PC-9 (cell line): ENCODE measurements at regions of chr15 and their contacts with region 1.

Region 1: DNA sequence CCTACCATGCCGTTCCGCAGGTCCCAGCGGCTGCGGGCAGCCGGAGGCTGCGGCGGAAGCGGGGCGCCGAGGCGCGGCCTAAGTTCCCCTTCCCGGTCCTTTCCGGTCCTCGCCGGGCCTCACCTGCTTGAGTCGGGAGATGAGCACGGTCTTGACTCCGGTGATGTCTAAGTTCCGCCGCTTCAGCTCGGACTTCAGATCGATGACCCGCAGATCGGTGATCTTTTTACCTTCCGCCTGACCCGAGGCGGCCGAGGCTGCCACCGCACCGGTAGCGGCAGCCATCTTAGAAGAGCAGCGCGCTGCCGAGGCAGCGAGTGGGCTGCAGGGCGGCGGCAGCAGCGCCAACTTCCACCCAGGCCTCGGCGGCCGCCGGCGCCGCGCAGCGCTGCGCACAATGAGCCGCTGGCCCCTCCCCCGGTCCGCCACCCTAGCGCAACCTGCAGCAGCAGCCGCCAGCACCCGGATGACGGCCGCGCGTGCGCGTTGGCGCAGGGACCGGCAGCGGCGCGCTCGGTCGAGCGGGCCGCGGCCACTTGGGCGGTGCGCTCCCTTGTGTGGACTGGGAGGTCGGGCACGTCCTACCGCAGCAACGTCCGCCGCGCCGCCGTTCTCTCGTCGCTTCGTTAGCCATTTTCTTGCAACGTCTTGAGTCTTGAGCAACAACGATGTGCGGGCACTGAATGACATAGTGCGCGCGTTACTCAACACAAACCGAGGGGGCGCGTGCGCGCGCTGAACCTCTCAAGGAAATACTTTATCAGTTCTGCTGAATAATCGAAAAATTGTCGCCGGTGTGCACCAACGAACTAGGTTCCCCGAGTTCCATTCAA is at the start of gene SLTM:
- DNase-seq: peak; percentile 85 to 89
- H3K4me3 ChIP-seq: peak within 1 kb of the TSS; percentile 96
- H3K27ac ChIP-seq: peak within 1 kb of the TSS; percentile 98
- H3K4me1 ChIP-seq: peaks cover 21% of the 10 kb centered on the region
- H3K27me3 ChIP-seq: no peaks in the 10 kb centered on the region
- CTCF ChIP-seq: peak; percentile 46; the same call in 1 of the 2 replicates
- total RNA-seq, gene SLTM: 81.4 and 110 TPM in 2 replicates

Region 2: GRCh38 chr15:58616171-58616570 is 317.3 kb before region 1 on chr15:
- CTCF ChIA-PET with region 1: no interaction called
- POLR2A ChIA-PET with region 1: no interaction called
- intact Hi-C with region 1: no loop called
- DNase-seq: no peak
- H3K4me3 ChIP-seq: no peak overlapping the region
- H3K27ac ChIP-seq: no peak overlapping the region
- H3K4me1 ChIP-seq: no peaks in the 10 kb centered on the region
- H3K27me3 ChIP-seq: no peaks in the 10 kb centered on the region
- CTCF ChIP-seq: no peak

Region 3: DNA sequence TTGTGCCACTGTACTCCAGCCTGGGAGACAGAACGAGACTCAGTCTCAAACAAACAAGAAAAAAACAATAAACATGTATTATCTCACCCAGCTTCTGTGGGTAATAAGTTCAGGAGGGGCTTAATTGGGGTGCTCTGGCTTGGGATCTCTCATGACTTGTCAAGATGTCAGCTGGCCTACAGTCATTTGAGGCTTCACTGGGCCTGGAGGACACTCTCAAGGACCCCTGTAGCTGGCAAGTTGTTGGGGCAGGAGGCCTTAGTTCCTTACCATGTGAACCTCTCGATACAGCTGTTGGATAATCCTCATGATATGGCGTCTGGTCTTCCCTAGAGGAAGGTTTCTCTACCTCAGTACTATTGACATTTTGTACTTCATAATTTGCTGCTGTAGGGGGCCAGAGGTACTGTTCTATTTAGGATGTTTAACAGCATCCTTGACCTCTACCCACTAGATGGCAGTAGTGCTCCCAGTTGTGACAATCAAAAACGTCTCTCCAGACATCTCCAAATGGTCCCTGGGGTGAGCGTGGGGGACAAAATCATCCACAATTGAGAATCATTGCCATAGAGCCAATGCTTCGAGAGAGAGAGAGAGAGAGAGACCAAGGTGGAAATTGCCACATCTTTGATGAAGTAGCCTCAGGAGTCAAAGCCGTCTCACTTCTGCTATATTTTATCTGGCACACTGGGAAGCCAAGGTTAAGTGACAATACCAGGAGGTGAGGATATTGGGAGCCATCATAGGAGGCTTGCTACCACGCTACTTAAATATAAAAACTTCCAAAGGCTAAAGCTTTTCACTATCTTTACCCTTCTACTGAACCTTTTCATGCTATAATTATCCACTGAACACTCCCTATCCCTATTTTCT is 23.8 kb after region 1 on chr15:
- CTCF ChIA-PET with region 1: interaction called, 8 read pairs
- POLR2A ChIA-PET with region 1: no interaction called
- intact Hi-C with region 1: loop called (anchors 2 kb)
- DNase-seq: peak; percentile 43 to 61
- H3K4me3 ChIP-seq: no peak overlapping the region
- H3K27ac ChIP-seq: no peak overlapping the region
- H3K4me1 ChIP-seq: peaks cover 41% of the 10 kb centered on the region
- H3K27me3 ChIP-seq: no peaks in the 10 kb centered on the region
- CTCF ChIP-seq: peak; percentile 81